Right ventricle myocardium inferior (tissue), 1 donor: ENCODE measurements at regions of chr9 and their contacts with region 1.

Region 1: GRCh38 chr9:28073270-28073669 is 500.0 kb upstream of the C9orf72 start:
- DNase-seq: no peak
- ATAC-seq: no peak

Region 2: GRCh38 chr9:27726244-27727081 is 346.8 kb before region 1 on chr9:
- intact Hi-C with region 1: loop called (anchors 10 kb)
- DNase-seq: no peak
- ATAC-seq: no peak

Region 3: DNA sequence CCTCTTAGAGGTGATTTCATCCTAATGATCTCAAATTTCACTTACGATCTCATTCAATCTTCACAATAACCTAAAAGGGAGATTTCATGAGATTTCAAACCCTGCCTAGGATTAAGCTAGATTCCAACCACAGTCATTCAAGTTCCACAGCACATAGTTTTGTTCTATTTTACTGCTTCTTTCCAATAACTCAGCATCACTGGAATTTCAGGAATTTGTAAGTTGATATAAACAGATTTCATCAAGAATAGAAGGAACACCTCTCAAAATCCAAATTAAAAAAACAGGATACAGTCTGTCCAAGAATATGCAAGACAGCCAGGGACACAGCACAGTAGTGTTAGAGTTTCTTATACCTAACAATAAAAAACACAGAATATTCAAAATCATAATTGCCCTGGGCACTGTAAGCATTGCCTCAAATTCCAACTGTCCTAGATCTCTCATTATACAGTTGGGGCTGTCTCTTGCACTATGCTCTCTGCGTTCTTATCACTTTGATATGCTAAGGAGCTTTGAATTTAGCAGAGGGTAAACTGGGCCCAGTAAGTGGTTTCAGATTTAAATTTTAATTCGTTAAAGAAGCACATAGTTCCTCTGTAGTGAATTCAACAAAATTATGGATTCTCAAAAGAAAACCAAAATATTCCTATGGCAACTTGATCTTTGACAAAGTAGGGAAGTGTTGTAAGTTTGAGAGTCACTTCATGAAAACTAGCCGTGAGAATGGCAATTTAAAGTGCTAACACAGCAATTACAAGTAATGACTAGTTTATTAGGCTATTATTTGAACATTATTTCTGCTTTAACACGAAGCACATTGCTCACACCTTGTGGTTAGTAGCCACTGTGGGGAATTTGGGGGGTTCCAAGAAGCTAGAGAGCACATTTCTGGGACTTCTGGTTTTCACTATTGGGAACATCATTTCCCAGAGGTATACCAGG is 21.4 kb before region 1 on chr9:
- intact Hi-C with region 1: no loop called
- DNase-seq: no peak
- ATAC-seq: no peak

Region 4: DNA sequence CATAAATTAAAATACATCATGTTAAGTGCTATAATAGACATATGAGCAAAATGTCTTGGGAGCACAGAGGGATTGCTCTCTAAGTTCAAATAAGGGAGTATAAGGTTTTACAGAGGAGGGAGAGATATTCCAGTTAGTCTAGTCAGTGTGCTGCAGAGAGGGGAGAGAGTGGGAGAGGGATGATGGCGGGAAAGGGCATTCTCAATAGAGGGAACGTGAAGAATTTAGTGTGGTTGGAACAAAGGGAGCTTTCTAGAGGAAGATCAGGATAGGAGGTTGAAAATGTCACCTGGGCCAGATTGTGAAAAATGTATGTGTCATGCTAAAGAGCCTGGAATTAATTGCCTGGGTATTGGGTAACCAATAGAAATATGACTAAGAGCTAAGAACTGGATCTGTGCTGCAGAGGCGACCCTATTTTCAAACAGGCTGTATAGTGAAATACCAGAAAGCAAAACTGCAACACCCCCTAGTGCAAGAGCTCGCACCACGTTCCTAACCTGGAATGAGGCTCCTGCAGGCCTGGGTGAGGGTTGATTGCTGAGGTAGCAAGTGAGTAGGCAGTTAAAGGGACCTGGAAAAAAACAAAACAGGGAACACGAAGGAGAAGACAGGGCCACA is 291.9 kb after region 1 on chr9:
- intact Hi-C with region 1: no loop called
- DNase-seq: no peak
- ATAC-seq: no peak